ENCODE measurements at regions of chrX and their contacts with region 1.

Region 1: GRCh38 chrX:68196939-68197791 is 236.1 kb downstream of the OPHN1 start:
- DNase-seq: peak; percentile 5 to 28
- H3K4me3 ChIP-seq: no peak overlapping the region
- H3K27ac ChIP-seq: no peak overlapping the region
- H3K4me1 ChIP-seq: no peaks in the 10 kb centered on the region
- H3K27me3 ChIP-seq: no peaks in the 10 kb centered on the region
- CTCF ChIP-seq: peak; percentile 21 to 72 (median 60)
- POLR2A ChIP-seq: no peak

Region 2: DNA sequence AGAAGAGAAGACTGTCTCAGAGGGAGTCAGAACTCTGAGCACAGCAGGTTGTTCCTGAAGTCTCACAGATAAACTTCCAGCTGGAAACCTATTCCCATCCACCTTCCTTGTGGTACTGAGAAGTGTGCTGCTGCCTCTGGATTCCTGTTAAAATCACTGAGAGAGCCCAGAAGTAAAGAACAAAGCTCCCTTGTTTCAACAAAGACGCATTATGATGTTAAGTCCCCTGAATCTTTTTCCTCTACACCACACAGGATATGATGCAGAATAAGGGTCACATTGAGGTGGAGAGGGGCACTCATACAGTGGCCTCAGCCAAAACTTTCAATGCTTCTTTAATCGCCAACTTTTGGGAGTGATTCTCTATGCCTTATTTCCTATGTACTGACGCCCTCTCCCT is 84.8 kb before region 1 on chrX:
- intact Hi-C with region 1: no loop called
- DNase-seq: no peak
- H3K4me3 ChIP-seq: no peak overlapping the region
- H3K27ac ChIP-seq: no peak overlapping the region
- H3K4me1 ChIP-seq: no peaks in the 10 kb centered on the region
- H3K27me3 ChIP-seq: no peaks in the 10 kb centered on the region
- CTCF ChIP-seq: no peak
- POLR2A ChIP-seq: no peak

Region 3: GRCh38 chrX:68462653-68463052 is 265.5 kb after region 1 on chrX:
- intact Hi-C with region 1: loop called (anchors 5 kb)
- DNase-seq: peak; percentile 5 to 6
- H3K4me3 ChIP-seq: no peak overlapping the region
- H3K27ac ChIP-seq: no peak overlapping the region
- H3K4me1 ChIP-seq: no peaks in the 10 kb centered on the region
- H3K27me3 ChIP-seq: no peaks in the 10 kb centered on the region
- CTCF ChIP-seq: peak in 4 of 6 experiments; percentile 53 to 78 (median 60)
- POLR2A ChIP-seq: no peak